Psoas muscle (tissue), 8 donors: ENCODE measurements at regions of chr15 and their contacts with region 1.

Region 1: DNA sequence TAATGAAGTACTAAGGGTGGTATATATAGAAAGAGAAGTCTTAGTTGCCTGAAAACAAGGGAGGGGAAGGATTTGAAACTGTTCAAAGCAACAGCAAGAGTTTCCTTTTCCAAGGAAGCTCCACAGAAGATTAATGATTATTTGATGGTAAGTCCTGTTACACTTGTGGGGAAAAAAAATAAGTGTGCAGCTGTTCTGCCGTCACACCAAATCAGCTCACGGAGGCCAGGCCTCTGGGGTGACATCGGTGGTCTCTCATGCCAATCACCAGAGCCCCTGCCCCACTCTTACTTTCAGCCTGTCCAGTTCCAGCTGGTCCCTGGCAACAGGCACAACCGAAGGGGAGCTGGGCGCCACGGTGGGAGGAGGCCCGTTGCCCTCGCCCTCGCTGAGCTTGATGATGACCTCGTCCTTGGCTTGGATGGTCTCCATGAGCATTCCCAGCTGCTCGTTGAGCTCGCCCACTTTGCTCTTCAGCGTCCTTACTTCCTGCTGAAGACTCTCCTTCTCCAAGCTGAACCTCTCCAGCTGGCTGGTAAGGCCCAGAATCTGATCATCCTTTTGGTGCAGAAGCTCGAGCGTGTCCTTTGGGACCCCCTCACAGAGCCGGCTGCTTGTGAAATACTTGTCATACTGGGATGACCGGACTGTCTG is 53.5 kb downstream of the TBC1D2B start:
- DNase-seq: peak; percentile 81 to 89
- ATAC-seq: peak; percentile 81 to 87 (median 82)
- H3K4me3 ChIP-seq: no peak overlapping the region
- H3K27ac ChIP-seq: peak overlapping the region; percentile 67
- H3K4me1 ChIP-seq: peaks cover 23% of the 10 kb centered on the region
- H3K27me3 ChIP-seq: no peaks in the 10 kb centered on the region
- CTCF ChIP-seq: no peak

Region 2: DNA sequence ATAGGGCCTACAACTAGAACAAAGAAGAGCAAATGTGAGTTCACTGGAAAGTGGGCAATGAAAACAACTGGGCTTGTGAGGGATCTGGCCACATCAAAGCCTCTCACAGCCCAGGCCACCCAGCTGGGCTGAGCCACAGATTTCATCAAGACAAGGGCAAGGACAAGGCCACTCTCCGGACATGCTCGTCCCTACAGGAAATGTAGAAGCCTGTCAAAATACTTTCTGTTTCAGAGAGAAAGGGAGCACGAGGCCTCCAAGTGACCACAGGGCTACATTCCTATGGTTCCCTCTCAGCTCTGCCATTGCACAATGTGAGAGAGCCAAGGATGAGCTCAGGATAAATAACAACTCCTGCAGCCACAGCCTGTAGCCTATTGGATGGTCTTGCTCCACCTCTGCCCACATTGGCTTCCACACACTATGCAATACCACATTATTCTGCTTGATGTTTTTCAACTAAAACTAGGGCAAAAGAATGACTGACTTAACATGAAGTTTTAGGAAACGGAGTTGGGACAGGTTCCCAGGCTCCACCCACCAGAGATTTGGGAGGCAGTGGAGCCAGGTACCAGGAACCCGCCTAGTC is 41.4 kb after region 1 on chr15:
- intact Hi-C with region 1: loop called in 1 of 2 experiments (anchors 5 kb)
- DNase-seq: peak; percentile 71 to 81
- ATAC-seq: peak; percentile 88 to 91 (median 90)
- H3K4me3 ChIP-seq: no peak overlapping the region
- H3K27ac ChIP-seq: peak overlapping the region; percentile 81
- H3K4me1 ChIP-seq: peaks cover 73% of the 10 kb centered on the region
- H3K27me3 ChIP-seq: no peaks in the 10 kb centered on the region
- CTCF ChIP-seq: no peak